ENCODE measurements at regions of chr1 and their contacts with region 1.

Region 1: DNA sequence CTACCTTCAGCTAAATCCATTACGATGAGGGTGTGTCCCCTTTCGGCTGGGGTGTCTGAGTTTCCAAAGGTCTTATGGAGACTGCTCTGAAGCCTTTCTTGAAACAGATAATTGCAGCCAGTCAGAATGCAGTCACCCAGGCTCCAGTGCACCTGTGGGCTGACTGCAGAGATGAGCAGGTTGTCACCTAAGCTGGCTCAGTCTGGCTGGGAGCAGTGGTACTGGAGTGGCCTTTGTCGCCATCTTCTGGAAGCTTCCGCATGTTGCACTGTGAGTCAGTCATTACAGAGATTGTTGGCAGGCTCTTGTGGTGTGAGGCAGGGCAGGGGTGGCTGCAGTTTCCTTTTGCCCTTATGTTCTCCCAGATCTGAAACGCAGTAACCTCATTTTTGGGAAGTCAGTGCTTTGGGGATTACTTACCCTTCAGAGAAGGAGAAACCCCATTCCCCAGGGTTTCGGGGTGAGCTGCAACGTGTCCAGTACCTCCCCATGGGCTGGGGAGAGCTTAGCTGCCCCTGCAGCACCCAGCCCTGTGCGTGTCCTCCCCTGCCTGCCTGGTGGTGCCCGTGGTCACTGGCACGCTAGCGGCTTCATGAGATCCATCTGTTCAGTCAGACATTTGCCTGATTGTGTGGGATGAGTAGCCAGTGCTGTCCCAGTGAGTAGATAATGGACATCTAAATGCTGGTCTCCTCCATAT is 48.0 kb downstream of the SMYD2 start:
- DNase-seq: peak; percentile 83 to 95
- H3K4me3 ChIP-seq: no peak overlapping the region
- CTCF ChIP-seq: peak in 1 of 3 donors; percentile 92
- POLR2A ChIP-seq: no peak

Region 2: GRCh38 chr1:213256438-213257087 is 1072.4 kb before region 1 on chr1:
- intact Hi-C with region 1: loop called (anchors 10 kb)
- DNase-seq: no peak
- H3K4me3 ChIP-seq: no peak overlapping the region
- CTCF ChIP-seq: no peak
- POLR2A ChIP-seq: no peak

Region 3: GRCh38 chr1:214261206-214262123 is 67.5 kb before region 1 on chr1:
- intact Hi-C with region 1: loop called (anchors 5 kb)
- DNase-seq: peak; percentile 76 to 96
- H3K4me3 ChIP-seq: no peak overlapping the region
- CTCF ChIP-seq: peak in 1 of 3 donors; percentile 62
- POLR2A ChIP-seq: no peak

Measured in lower leg skin (tissue), 4 donors.